Adrenal gland (tissue), 19 donors: ENCODE measurements at regions of chr6 and their contacts with region 1.

Region 1: GRCh38 chr6:36290661-36291620 is 21.1 kb downstream of the PNPLA1 start:
- DNase-seq: peak; percentile 80 to 92 (median 86)
- H3K4me3 ChIP-seq: no peak overlapping the region
- H3K27ac ChIP-seq: no peak overlapping the region
- H3K4me1 ChIP-seq: peaks cover 9 to 16% of the 10 kb centered on the region in 2 donors
- H3K27me3 ChIP-seq: no peaks in the 10 kb centered on the region
- CTCF ChIP-seq: no peak
- POLR2A ChIP-seq: no peak

Region 2: GRCh38 chr6:36123257-36124139 is 167.4 kb before region 1 on chr6:
- intact Hi-C with region 1: loop called in 1 of 2 experiments (anchors 10 kb)
- DNase-seq: peak; percentile 91 to 94 (median 93)
- H3K4me3 ChIP-seq: no peak overlapping the region
- H3K27ac ChIP-seq: peak overlapping the region; percentile 6 to 71 (median 66)
- H3K4me1 ChIP-seq: peaks cover 29 to 43% of the 10 kb centered on the region in 2 donors
- H3K27me3 ChIP-seq: no peaks in the 10 kb centered on the region
- CTCF ChIP-seq: peak; percentile 64 to 91 (median 78)
- POLR2A ChIP-seq: no peak

Region 3: DNA sequence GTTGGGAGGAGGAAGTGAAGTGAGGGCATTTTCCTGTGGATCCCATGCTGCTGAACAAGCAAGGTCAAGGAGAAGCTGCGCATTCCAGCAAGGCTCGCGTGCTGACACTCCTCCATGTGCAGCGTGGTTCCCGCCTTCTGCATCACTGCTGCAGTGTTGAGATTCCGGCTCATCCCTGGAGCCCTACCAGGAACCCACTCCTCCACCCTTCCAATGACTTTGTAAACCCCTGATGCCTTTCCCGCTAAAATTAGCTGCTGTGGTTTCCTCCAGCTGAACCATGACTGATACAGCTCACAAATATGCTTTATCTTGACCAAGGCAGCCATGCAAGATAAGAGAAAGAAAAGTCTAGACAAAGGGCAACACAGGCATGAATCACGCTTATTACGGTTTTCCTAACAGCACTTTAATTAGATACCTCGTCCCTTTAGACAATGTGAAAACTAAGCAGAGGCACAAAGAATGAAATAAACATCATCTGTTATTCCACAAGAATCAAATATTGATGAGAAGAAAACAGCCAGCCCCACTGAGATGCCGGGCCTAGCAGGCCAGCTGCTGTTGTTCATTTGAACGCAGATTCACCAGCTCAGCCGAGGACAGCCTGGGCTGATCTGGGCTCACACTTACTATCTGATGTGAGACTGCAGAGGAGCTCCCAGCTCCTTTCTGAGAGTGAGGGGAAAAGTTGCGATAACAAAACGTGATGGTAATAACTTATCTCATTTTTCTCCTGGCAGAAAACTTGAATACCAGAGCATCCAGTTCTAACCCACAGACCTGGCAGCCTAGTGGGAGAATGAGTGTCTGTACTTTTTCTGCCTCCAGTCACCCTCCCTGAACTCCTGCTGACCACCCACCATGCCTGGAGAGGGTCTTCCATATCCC is 60.0 kb after region 1 on chr6:
- intact Hi-C with region 1: loop called in 1 of 2 experiments (anchors 10 kb)
- DNase-seq: peak in 6 of 7 donors; percentile 66 to 81 (median 70)
- H3K4me3 ChIP-seq: no peak overlapping the region
- H3K27ac ChIP-seq: peak overlapping the region in 4 of 5 donors; percentile 46 to 89 (median 70)
- H3K4me1 ChIP-seq: peaks cover 0 to 22% of the 10 kb centered on the region in 2 donors
- H3K27me3 ChIP-seq: no peaks in the 10 kb centered on the region
- CTCF ChIP-seq: no peak
- POLR2A ChIP-seq: no peak